H1 (cell line): ENCODE measurements at regions of chr3 and their contacts with region 1.

Region 1: DNA sequence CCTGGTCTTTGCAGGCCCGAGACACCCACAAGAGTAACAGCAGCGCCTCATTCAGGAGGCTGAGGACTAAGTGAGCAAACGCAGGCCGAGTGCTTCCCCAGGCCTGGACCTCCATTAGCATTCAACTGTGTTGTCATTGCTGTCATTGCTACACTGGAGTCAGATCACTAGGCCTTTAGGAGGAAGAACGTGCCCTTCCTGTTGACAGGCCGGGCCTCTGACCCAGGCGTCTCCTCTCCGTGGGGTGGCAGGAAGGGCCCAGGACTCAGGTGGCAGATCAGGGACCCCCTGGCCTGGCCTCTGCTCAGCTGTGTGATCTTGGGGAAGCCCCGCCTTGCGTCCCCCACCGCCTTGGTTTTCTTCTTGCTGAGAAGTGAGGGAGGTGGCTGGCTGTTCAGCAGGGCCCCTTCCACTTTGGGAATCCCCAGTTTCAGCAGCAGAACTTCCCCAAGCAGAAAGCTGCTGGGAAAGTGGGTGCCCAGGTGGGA is 19.1 kb downstream of the ZDHHC19 start:
- DNase-seq: no peak
- H3K4me3 ChIP-seq: no peak overlapping the region
- H3K27ac ChIP-seq: no peak overlapping the region
- H3K4me1 ChIP-seq: peaks cover 0 to 9% (median 3%) of the 10 kb centered on the region in 4 experiments; a peak in 5 of 7 replicates
- H3K27me3 ChIP-seq: no peaks in the 10 kb centered on the region
- CTCF ChIP-seq: no peak
- EP300 ChIP-seq: no peak
- POLR2A ChIP-seq: no peak
- RAD21 ChIP-seq: peak; percentile 23 to 44; a peak in 2 of 4 replicates

Region 2: GRCh38 chr3:196016485-196016884 is 175.6 kb before region 1 on chr3:
- CTCF ChIA-PET with region 1: interaction called, 11 read pairs
- POLR2A ChIA-PET with region 1: no interaction called
- DNase-seq: no peak
- H3K4me3 ChIP-seq: no peak overlapping the region
- H3K27ac ChIP-seq: no peak overlapping the region
- H3K4me1 ChIP-seq: no peaks in the 10 kb centered on the region
- H3K27me3 ChIP-seq: no peaks in the 10 kb centered on the region
- CTCF ChIP-seq: no peak
- EP300 ChIP-seq: no peak
- POLR2A ChIP-seq: no peak
- RAD21 ChIP-seq: no peak

Region 3: DNA sequence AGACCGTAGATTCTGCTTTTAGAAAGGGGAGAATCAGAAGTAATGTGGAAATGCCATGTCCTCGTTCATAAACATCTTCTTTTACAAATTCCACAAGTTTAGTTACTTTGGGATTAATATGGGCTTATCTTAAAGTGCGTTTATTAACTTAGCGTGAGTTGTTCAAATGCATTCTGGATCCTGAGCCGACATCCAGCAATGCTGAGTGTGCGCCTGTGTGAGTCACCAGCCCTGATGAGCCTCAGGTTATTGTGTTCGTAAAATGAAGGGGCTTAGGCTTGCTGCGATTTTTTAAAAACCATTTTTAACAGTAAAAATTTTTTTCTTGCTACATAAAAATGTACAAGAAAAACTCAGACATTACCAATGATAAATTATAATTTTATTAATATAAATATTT is 168.1 kb before region 1 on chr3:
- CTCF ChIA-PET with region 1: interaction called, 18 read pairs
- POLR2A ChIA-PET with region 1: no interaction called
- DNase-seq: no peak
- H3K4me3 ChIP-seq: no peak overlapping the region
- H3K27ac ChIP-seq: no peak overlapping the region
- H3K4me1 ChIP-seq: no peaks in the 10 kb centered on the region
- H3K27me3 ChIP-seq: no peaks in the 10 kb centered on the region
- CTCF ChIP-seq: no peak
- EP300 ChIP-seq: no peak
- POLR2A ChIP-seq: no peak
- RAD21 ChIP-seq: no peak

Region 4: GRCh38 chr3:196081791-196082618 is 110.1 kb before region 1 on chr3 and contains the start of gene TFRC:
- CTCF ChIA-PET with region 1: interaction called, 299 read pairs
- POLR2A ChIA-PET with region 1: interaction called, 11 read pairs
- DNase-seq: peak; percentile 82 to 98
- H3K4me3 ChIP-seq: peak within 1 kb of the TSS; percentile 68 to 93 (median 82)
- H3K27ac ChIP-seq: peak within 1 kb of the TSS; percentile 80
- H3K4me1 ChIP-seq: peaks cover 2 to 10% (median 6%) of the 10 kb centered on the region in 4 experiments; a peak in 6 of 7 replicates
- H3K27me3 ChIP-seq: no peaks in the 10 kb centered on the region; a peak in 1 of 7 replicates
- CTCF ChIP-seq: no peak
- EP300 ChIP-seq: no peak
- POLR2A ChIP-seq: peak; percentile 99
- RAD21 ChIP-seq: no peak
- total RNA-seq, gene TFRC: 146 and 161 TPM in 2 replicates

Region 5: GRCh38 chr3:196096382-196096953 is 95.6 kb before region 1 on chr3:
- CTCF ChIA-PET with region 1: interaction called, 63 read pairs
- POLR2A ChIA-PET with region 1: no interaction called
- DNase-seq: no peak
- H3K4me3 ChIP-seq: no peak overlapping the region
- H3K27ac ChIP-seq: no peak overlapping the region
- H3K4me1 ChIP-seq: no peaks in the 10 kb centered on the region
- H3K27me3 ChIP-seq: no peaks in the 10 kb centered on the region
- CTCF ChIP-seq: no peak
- EP300 ChIP-seq: no peak
- POLR2A ChIP-seq: no peak
- RAD21 ChIP-seq: no peak

Region 6: GRCh38 chr3:196237203-196237602 is 45.1 kb after region 1 on chr3:
- CTCF ChIA-PET with region 1: no interaction called
- POLR2A ChIA-PET with region 1: no interaction called
- DNase-seq: no peak
- H3K4me3 ChIP-seq: no peak overlapping the region
- H3K27ac ChIP-seq: no peak overlapping the region
- H3K4me1 ChIP-seq: peaks cover 0 to 3% (median under 1%) of the 10 kb centered on the region in 4 experiments; a peak in 3 of 7 replicates
- H3K27me3 ChIP-seq: no peaks in the 10 kb centered on the region
- CTCF ChIP-seq: no peak
- EP300 ChIP-seq: no peak
- POLR2A ChIP-seq: no peak
- RAD21 ChIP-seq: no peak

Region 7: GRCh38 chr3:196298521-196298920 is 106.4 kb after region 1 on chr3:
- CTCF ChIA-PET with region 1: no interaction called
- POLR2A ChIA-PET with region 1: no interaction called
- DNase-seq: no peak
- H3K4me3 ChIP-seq: no peak overlapping the region
- H3K27ac ChIP-seq: no peak overlapping the region
- H3K4me1 ChIP-seq: no peaks in the 10 kb centered on the region
- H3K27me3 ChIP-seq: no peaks in the 10 kb centered on the region
- CTCF ChIP-seq: no peak
- EP300 ChIP-seq: no peak
- POLR2A ChIP-seq: no peak
- RAD21 ChIP-seq: no peak

Region 8: GRCh38 chr3:196341137-196341536 is 149.1 kb after region 1 on chr3:
- CTCF ChIA-PET with region 1: no interaction called
- POLR2A ChIA-PET with region 1: no interaction called
- DNase-seq: no peak
- H3K4me3 ChIP-seq: no peak overlapping the region
- H3K27ac ChIP-seq: no peak overlapping the region
- H3K4me1 ChIP-seq: no peaks in the 10 kb centered on the region; a peak in 1 of 7 replicates
- H3K27me3 ChIP-seq: no peaks in the 10 kb centered on the region
- CTCF ChIP-seq: no peak
- EP300 ChIP-seq: no peak
- POLR2A ChIP-seq: no peak
- RAD21 ChIP-seq: no peak